Endothelial cell of umbilical vein (primary cell): ENCODE measurements at regions of chr1 and their contacts with region 1.

Region 1: DNA sequence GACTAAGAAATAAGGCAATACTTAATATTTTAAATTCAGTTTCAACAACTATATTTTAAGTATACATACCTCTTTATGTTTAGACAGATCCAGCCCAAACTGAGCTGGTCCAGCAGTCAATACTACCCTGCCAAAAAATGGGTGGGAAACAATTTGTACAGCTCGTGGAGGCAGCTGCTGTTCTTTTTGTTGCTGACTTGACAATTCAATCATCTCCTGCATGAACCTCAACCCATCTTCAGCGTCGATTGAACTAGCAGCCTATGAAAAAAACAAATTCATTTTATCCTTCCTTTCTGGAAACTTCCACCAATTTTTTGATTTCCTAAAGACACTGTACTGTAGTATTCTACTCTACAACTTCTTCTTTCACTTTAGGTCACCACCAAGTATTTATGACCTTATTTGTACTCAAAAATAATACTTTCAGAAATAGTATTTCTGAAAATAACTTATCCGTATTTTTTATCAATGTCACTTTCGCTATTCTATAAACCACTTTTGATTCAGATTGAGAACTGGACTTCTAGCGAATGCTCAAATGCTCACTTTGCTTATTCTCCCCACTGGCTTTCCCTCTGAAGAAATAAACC is 46.5 kb downstream of the EDEM3 start:
- DNase-seq: no peak
- H3K4me3 ChIP-seq: no peak overlapping the region
- H3K27ac ChIP-seq: no peak overlapping the region
- H3K4me1 ChIP-seq: no peaks in the 10 kb centered on the region
- H3K27me3 ChIP-seq: no peaks in the 10 kb centered on the region
- CTCF ChIP-seq: no peak
- POLR2A ChIP-seq: no peak

Region 2: DNA sequence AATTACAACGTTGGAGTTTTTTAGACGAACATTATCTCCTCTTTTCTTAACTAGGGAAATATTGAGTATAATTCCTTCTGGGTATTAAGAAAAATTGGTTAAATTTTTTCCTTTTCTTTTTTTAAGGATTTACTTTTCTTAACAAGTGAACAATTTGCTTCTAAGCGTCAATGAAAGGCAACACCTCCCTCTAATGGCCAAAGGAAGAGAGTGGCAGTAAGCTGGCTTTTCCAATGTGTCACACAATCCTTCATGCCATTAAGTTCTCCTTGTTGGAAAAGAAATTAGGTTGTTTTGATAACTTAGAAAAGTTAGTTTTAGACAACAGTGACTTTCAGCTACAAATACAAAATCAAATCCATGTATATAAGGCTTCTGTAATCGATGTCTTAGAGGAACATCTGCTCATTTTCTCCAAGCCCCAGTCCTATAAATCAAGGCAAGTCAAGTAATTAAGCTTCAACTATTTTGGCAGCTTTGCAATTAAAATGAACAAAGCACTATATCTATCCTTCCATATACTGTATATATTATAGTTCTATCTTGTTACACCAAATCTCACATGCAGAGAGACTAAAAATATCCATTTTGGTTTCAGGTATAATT is 16.4 kb before region 1 on chr1:
- CTCF ChIA-PET with region 1: interaction called, 13 read pairs
- POLR2A ChIA-PET with region 1: no interaction called
- dilution Hi-C with region 1: no loop called
- intact Hi-C with region 1: no loop called
- DNase-seq: peak; percentile 67
- H3K4me3 ChIP-seq: no peak overlapping the region
- H3K27ac ChIP-seq: no peak overlapping the region
- H3K4me1 ChIP-seq: no peaks in the 10 kb centered on the region
- H3K27me3 ChIP-seq: no peaks in the 10 kb centered on the region
- CTCF ChIP-seq: peak; percentile 52 to 61
- POLR2A ChIP-seq: no peak